B cell (primary cell): ENCODE measurements at regions of chr7 and their contacts with region 1.

Region 1: DNA sequence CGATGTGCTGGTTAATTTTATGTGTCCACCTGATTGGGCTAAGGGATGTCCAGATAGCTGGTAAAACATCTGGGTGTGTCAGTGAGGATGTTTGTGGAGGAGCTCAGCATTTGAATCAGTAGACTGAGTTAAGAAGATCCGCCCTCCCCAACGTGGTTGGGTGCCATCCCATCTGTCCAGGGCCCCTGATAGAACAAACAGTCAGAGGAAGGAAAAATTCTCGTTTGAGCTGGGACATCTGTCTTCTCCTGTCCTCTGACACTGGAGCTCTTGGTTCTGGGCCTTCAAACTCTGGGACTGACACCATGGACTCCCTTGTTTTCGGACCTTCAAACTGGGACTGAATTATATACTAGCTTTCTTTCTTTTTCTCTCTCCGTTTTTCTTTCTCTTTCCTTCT is 59.6 kb downstream of the CARD11 start:
- DNase-seq: no peak
- ATAC-seq: no peak
- H3K4me3 ChIP-seq: no peak overlapping the region
- H3K4me3 Mint-ChIP-seq: no peak overlapping the region
- H3K27ac ChIP-seq: peak overlapping the region; percentile 57 to 92
- H3K27ac Mint-ChIP-seq: peak overlapping the region; percentile 82
- H3K4me1 ChIP-seq: peaks cover 57 to 76% of the 10 kb centered on the region in 2 donors
- H3K4me1 Mint-ChIP-seq: peaks cover 78% of the 10 kb centered on the region
- H3K27me3 ChIP-seq: no peaks in the 10 kb centered on the region
- H3K27me3 Mint-ChIP-seq: no peaks in the 10 kb centered on the region
- CTCF ChIP-seq: no peak

Region 2: GRCh38 chr7:2944739-2945138 is 39.4 kb before region 1 on chr7:
- CTCF ChIA-PET with region 1: no interaction called
- POLR2A ChIA-PET with region 1: interaction called, 12 read pairs
- intact Hi-C with region 1: no loop called
- DNase-seq: no peak
- ATAC-seq: no peak
- H3K4me3 ChIP-seq: no peak overlapping the region
- H3K4me3 Mint-ChIP-seq: no peak overlapping the region
- H3K27ac ChIP-seq: no peak overlapping the region
- H3K27ac Mint-ChIP-seq: peak overlapping the region; percentile 46
- H3K4me1 ChIP-seq: peaks cover 9 to 13% of the 10 kb centered on the region in 2 donors
- H3K4me1 Mint-ChIP-seq: peaks cover 31% of the 10 kb centered on the region
- H3K27me3 ChIP-seq: no peaks in the 10 kb centered on the region
- H3K27me3 Mint-ChIP-seq: no peaks in the 10 kb centered on the region
- CTCF ChIP-seq: no peak